Calu3 (cell line): ENCODE measurements at regions of chr3 and their contacts with region 1.

Region 1: GRCh38 chr3:86037916-86038315 is 953.0 kb downstream of the VGLL3 start:
- DNase-seq: no peak
- H3K4me3 Mint-ChIP-seq: no peak overlapping the region
- H3K27ac Mint-ChIP-seq: no peak overlapping the region
- H3K4me1 Mint-ChIP-seq: no peaks in the 10 kb centered on the region
- H3K27me3 Mint-ChIP-seq: no peaks in the 10 kb centered on the region
- CTCF ChIP-seq: no peak

Region 2: DNA sequence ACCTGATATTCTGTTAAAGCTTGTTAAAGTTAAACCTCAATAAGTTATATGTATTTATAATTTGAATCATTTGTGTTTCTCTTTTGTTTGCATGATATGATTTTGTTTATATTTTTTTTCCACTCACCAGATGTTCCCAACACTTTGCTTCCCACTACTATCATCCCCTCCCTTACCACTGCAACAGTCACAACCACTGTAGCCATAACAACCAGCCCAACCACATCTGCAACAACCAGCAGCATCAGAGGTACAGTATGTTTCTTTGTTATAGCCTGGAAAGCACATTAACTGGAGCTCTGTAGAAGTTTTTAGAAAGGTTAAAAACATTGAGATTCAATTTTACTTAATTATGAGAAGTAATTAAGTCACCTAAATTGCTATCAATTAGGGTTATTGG is 58.9 kb before region 1 on chr3:
- CTCF ChIA-PET with region 1: no interaction called
- intact Hi-C with region 1: loop called (anchors 10 kb)
- DNase-seq: no peak
- H3K4me3 Mint-ChIP-seq: no peak overlapping the region
- H3K27ac Mint-ChIP-seq: no peak overlapping the region
- H3K4me1 Mint-ChIP-seq: no peaks in the 10 kb centered on the region
- H3K27me3 Mint-ChIP-seq: no peaks in the 10 kb centered on the region
- CTCF ChIP-seq: no peak

Region 3: DNA sequence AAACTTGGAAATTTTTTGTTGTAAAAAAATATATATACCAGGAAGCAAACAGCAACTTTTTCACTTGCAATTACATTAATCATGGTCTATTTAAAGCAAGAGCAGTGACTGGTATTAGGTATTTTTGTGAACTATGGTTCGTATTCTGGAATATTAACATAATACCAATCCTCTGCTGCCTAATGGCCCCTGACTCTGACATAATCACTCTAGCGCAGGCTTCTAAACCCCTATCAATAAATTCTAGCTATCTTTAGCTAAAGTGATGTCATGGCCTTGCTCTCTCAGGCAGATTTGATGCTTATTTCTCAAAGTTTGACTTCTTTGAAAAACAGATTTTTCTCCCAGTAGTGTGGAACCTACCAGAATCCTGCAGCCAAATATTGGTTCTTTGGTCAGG is 144.7 kb after region 1 on chr3:
- CTCF ChIA-PET with region 1: no interaction called
- intact Hi-C with region 1: no loop called
- DNase-seq: no peak
- H3K4me3 Mint-ChIP-seq: no peak overlapping the region
- H3K27ac Mint-ChIP-seq: no peak overlapping the region
- H3K4me1 Mint-ChIP-seq: no peaks in the 10 kb centered on the region
- H3K27me3 Mint-ChIP-seq: no peaks in the 10 kb centered on the region
- CTCF ChIP-seq: no peak

Region 4: GRCh38 chr3:86303935-86304334 is 266.0 kb after region 1 on chr3:
- CTCF ChIA-PET with region 1: no interaction called
- intact Hi-C with region 1: no loop called
- DNase-seq: no peak
- H3K4me3 Mint-ChIP-seq: no peak overlapping the region
- H3K27ac Mint-ChIP-seq: no peak overlapping the region
- H3K4me1 Mint-ChIP-seq: no peaks in the 10 kb centered on the region
- H3K27me3 Mint-ChIP-seq: no peaks in the 10 kb centered on the region
- CTCF ChIP-seq: no peak